ENCODE measurements at regions of chr18 and their contacts with region 1.

Region 1: GRCh38 chr18:51029694-51030536 is at the start of gene SMAD4:
- DNase-seq: peak; percentile 97
- H3K4me3 Mint-ChIP-seq: peak within 1 kb of the TSS; percentile 98
- H3K27ac Mint-ChIP-seq: peak within 1 kb of the TSS; percentile 90
- H3K4me1 Mint-ChIP-seq: peaks cover 66% of the 10 kb centered on the region
- H3K27me3 Mint-ChIP-seq: no peaks in the 10 kb centered on the region
- total RNA-seq, gene SMAD4: 80.3 to 83.8 TPM

Region 2: DNA sequence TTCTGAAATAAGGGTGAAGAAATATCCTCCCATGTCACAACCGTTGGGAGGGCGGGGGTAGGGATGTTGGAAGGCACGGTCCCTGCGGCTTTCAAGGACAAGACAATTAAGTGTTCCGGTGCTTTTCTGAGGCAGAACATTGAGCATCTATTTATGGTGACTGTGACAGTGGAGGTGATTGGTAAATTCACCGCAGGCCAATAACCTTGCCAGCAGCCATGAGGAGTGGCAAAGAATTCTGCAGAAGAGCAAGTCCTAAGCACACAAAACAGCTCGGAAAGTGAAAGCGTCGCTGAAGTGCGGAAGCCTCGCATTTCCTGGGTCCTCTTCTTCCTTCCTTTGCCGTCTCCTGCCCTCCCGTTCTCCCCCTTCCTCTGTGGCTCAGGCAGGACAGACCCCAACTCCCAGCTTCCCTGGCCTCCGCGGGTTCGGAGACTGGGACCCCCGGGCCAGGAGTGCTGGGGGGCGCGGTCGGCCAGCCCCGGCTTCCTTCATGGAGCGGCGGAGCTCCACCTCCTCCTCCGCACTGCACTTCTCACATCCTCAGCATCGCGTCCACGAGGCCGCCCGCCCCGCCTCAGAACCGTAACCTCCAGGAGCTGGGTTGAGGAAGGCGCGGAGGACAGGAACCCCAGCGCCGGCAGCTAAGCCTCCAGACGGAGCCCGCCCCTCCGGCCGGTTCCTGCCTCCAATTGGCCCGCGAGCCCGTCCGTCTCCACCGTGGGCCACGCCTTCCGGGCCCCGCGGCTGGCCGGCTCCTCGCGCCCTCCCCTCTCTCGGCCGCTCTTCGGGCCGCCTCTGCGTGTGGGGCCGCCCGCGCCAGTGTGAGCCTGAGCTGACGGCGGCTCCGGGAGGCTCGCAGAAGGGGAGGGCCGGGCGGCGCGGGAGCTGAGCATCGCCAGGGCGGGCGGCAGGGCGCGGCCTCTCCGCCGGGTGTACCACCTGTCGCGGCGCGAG is 151.3 kb before region 1 on chr18 and contains the start of gene ME2:
- CTCF ChIA-PET with region 1: interaction called, 10 read pairs
- POLR2A ChIA-PET with region 1: interaction called, 111 read pairs
- DNase-seq: peak; percentile 93
- H3K4me3 Mint-ChIP-seq: peak within 1 kb of the TSS; percentile 95
- H3K27ac Mint-ChIP-seq: peak within 1 kb of the TSS; percentile 98
- H3K4me1 Mint-ChIP-seq: peaks cover 30% of the 10 kb centered on the region
- H3K27me3 Mint-ChIP-seq: peaks cover under 1% of the 10 kb centered on the region
- total RNA-seq, gene ME2: 71.8 to 73.6 TPM

Region 3: DNA sequence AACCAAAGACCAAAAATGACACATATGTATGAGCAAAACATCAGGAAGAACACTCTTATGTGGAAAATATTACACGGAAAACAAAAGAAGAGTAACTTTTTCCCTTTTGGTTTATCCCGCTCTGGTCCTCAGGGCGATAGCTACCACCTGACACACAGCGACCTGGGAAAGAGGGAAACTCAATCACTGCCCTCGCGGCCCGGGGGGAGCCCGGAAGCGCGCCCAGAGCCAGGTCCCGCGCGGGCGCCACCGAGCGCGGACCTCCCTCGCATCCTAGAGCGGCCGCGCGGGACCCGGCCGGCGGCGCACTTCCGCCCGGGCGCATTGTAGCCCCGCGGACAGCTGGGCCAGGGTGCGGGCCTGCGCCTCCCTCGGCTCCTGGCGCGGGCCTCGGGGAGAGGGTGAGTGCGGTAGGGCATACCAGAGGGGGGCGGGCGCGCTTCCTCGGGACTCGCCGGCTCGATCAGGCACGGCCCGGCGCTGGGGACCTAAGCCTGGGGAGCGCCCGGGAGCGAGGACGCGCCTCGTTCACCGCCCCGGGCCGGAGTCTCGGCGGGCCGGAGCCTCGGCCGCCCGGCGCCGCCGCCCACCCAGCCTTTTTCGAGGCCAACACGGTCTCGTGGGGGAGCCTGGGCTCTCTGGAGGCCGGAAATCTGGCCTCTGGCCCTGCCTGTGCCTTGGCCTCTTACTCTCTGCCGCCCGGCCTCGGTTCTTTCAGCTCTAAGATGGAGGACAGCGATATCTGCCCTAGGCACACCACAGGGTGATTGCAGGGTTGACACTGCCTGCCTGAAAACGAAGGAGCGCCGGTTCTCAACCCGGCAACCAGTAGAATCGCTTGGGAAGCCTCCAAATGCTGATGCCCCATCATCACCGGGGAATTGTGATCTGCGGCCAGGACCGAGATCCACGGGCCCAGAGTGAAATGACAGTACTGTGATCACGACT is 61.9 kb before region 1 on chr18 and contains the start of gene ELAC1:
- CTCF ChIA-PET with region 1: interaction called, 4 read pairs
- POLR2A ChIA-PET with region 1: interaction called, 120 read pairs
- DNase-seq: peak; percentile 67
- H3K4me3 Mint-ChIP-seq: peak within 1 kb of the TSS; percentile 97
- H3K27ac Mint-ChIP-seq: peak within 1 kb of the TSS; percentile 80
- H3K4me1 Mint-ChIP-seq: peaks cover 28% of the 10 kb centered on the region
- H3K27me3 Mint-ChIP-seq: no peaks in the 10 kb centered on the region
- total RNA-seq, gene ELAC1: 5.9 to 7.3 TPM

Region 4: GRCh38 chr18:51044928-51045585 is 15.1 kb after region 1 on chr18:
- CTCF ChIA-PET with region 1: interaction called, 12 read pairs
- POLR2A ChIA-PET with region 1: interaction called, 25 read pairs
- DNase-seq: no peak
- H3K4me3 Mint-ChIP-seq: no peak overlapping the region
- H3K27ac Mint-ChIP-seq: no peak overlapping the region
- H3K4me1 Mint-ChIP-seq: peaks cover 28% of the 10 kb centered on the region
- H3K27me3 Mint-ChIP-seq: no peaks in the 10 kb centered on the region

Region 5: DNA sequence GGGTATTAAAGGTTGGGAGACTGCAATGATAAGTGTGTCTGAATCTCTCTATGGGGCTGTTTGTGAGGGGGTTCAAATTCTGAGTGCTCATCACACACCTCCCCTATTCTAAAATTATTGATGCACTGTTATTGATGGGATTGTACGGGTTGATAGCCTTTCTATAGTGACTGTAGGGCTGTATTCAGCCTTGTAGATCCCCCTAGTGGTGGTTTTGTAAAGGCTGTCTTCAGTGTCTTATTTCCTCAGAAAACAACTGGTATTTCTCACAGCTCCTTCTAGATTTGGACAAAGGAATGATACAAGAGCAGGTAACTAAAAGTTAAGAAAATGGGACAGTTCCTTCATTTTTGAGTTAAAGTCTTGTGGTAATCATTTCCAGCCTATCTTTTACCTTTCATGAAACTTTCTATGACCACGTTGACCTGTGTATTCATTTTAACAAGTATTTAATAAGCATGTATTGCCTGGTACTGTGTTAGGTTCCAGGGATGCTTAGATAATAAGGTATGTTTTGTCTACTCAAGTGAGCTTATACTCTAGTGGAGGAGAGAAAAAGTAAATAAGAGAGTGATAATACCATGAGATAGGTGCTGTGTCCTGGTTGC is 21.3 kb after region 1 on chr18:
- CTCF ChIA-PET with region 1: interaction called, 12 read pairs
- POLR2A ChIA-PET with region 1: interaction called, 43 read pairs
- DNase-seq: no peak
- H3K4me3 Mint-ChIP-seq: no peak overlapping the region
- H3K27ac Mint-ChIP-seq: peak overlapping the region; percentile 44
- H3K4me1 Mint-ChIP-seq: peaks cover 28% of the 10 kb centered on the region
- H3K27me3 Mint-ChIP-seq: no peaks in the 10 kb centered on the region

Region 6: GRCh38 chr18:51059969-51060368 is 30.1 kb after region 1 on chr18:
- CTCF ChIA-PET with region 1: interaction called, 4 read pairs
- POLR2A ChIA-PET with region 1: interaction called, 43 read pairs
- DNase-seq: no peak
- H3K4me3 Mint-ChIP-seq: no peak overlapping the region
- H3K27ac Mint-ChIP-seq: no peak overlapping the region
- H3K4me1 Mint-ChIP-seq: peaks cover 10% of the 10 kb centered on the region
- H3K27me3 Mint-ChIP-seq: no peaks in the 10 kb centered on the region

Region 7: DNA sequence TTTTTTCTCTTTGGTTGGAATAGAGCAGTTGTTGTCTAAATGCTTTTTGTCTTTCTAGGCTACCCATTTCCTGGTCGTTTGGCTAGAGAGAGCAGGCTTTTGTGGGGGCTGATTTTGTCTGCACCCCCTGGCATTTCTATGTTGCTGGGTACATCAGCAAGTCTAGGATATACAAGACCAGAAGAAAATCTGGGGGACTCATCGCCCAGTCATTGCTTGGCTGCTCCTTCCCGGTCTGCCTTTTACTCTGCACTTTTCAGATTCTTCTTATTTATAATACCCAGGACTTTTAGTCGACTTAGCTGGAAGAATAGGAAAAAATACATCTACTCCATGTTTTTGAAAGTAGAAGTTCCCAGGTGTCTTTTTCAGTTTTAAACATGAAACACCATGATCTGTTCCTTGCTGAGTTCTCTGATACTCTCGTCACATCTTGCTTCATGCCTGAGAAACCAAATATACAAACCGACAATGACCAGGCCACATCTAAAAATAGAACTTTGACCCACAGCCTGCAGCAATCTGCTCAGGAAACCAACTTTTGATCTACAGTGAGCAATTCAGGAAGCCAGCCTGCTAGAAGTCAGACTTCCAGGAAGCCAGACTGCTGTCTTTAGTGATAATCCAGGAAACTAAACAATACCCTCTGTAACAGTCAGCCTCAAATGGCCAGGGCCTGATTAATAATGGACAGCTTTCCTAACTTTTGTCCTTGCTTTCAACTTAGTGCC is 331.4 kb after region 1 on chr18:
- CTCF ChIA-PET with region 1: no interaction called
- POLR2A ChIA-PET with region 1: no interaction called
- DNase-seq: peak; percentile 34
- H3K4me3 Mint-ChIP-seq: no peak overlapping the region
- H3K27ac Mint-ChIP-seq: peak overlapping the region; percentile 58
- H3K4me1 Mint-ChIP-seq: peaks cover 18% of the 10 kb centered on the region
- H3K27me3 Mint-ChIP-seq: peaks cover 17% of the 10 kb centered on the region

Measured in activated CD4-positive, alpha-beta memory T cell treated with anti-CD3 and anti-CD28 coated beads, Interleukin-2, amount 10 ng/mL, durations not matched to agents 7 days and 5 days (primary cell).